HEK293 (cell line): ENCODE measurements at regions of chr5 and their contacts with region 1.

Region 1: DNA sequence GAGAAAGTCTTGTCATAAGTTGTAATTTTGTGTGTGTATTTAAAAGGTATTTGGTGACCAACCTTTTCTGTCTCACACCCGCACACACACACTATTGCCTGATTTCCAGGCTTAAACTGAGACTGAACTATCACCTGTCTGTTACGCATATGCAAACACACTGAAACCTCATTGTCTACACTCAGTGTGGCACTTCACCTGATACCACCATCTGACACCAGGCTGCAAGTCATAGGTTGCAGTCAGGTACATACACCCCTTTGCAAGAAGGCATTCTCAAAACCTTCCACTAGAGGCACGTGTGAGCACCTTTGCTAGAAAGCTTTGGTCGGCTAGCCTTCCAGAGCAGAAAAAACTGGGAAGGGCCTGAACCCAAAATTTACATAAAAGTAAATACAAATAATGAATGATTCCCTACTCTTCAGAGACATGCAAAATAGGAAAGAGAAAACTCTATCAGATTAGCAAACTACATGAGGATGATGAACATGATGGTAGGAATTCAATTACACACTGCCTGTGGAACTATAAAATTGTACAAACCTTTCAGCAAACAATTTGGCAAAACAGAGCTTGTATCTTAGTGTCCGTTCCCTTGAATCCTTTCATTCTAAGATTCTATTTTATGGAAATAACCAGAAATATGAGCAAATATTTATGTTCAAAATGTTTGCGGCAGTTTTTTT is 5.9 kb upstream of the FOXD1 start:
- H3K4me3 ChIP-seq: no peak overlapping the region
- H3K27ac ChIP-seq: no peak overlapping the region
- H3K4me1 ChIP-seq: no peaks in the 10 kb centered on the region
- CTCF ChIP-seq: peak; percentile 53

Region 2: DNA sequence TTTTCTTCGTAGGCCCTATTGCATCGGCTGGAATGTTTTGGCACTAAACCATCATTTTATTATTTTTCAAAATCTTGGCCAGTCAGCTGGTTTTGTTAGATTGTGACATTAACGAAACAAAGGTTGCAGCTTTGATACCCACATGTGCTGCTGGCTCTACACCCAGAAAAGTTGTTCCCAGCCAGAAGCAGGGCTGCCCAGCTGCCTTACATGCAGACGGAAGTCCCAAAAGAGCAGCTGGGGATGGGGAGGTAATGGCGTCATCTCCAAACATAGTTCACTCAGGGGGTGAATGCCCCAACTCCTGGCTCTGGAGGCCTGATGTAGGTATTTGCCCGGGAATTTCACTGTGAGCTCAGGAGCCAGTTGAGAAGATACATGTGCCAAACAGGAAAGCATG is 310.8 kb before region 1 on chr5:
- CTCF ChIA-PET with region 1: no interaction called
- POLR2A ChIA-PET with region 1: no interaction called
- H3K4me3 ChIP-seq: no peak overlapping the region
- H3K27ac ChIP-seq: no peak overlapping the region
- H3K4me1 ChIP-seq: no peaks in the 10 kb centered on the region
- CTCF ChIP-seq: no peak

Region 3: DNA sequence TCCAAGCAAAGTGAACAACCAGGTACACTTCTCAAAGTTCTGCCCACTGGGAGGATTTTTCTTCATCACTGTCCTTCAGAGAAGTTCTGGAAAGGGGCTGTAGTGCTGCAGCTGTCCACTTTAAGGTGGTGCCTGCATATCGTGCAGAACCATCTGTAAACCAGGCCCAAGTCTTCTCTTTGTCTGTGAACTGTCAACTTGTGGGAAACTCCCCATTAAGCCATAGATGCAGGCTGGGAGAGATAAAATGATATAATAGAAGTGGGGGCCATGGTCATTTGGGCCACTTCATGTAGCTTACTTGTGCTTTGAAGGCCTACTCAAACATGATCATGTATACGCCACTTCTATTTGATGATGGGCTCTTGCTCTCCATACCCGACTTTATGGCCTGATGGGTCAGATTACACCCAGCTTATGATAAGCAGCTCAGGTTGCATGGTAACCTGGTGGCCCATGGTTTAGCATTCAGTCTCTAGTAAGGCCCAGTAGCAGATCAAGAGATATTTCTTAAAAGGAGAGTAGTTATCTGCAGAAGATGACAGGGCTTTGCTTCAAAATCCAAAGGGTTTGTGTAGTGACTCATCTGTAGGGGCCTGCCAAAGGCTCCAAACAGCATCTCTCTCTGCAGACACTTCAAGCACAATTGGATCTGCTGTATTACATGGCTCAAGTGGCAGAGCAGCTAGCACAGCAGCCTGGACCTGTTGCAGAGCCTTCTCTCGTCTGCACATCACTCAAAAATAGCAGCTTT is 28.1 kb after region 1 on chr5:
- CTCF ChIA-PET with region 1: interaction called, 11 read pairs
- POLR2A ChIA-PET with region 1: no interaction called
- H3K4me3 ChIP-seq: no peak overlapping the region
- H3K27ac ChIP-seq: no peak overlapping the region
- H3K4me1 ChIP-seq: no peaks in the 10 kb centered on the region
- CTCF ChIP-seq: no peak

Region 4: DNA sequence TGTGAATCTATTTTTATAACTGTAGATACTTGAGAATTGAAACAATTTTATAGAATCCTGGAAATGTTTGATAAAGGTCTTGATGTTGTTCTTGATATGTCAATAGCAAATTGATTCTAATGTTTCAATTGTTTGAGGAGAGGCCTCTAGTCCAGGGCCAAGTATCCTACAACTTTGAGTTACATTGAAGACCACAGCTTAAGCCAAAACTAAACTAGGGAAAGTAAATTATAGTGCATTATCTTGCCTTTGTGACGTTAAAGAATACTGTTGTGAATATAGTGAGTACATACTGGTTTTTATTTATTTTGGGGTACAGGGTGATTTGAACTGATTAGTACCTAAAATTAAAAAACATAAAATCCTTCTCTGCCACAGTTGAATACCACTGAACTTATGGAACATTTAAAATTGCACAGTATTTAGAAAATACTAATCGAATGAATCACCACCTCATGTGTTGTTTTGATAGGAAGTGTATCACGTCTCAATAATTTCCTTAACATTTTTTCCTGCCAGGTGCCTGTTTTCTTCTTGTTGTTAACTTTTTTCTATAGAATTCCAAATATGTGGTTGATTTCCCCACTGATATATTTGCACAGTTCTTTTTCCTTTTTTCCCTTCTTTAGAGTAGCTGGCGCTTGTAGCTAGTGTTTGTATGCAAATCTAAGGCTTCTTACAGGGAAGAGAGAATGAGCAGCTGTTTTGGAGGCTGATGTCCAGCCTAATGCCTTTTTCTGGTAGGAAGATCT is 184.0 kb after region 1 on chr5:
- CTCF ChIA-PET with region 1: no interaction called
- POLR2A ChIA-PET with region 1: no interaction called
- H3K4me3 ChIP-seq: no peak overlapping the region; the same call in 1 of the 2 replicates
- H3K27ac ChIP-seq: no peak overlapping the region
- H3K4me1 ChIP-seq: peaks cover 43% of the 10 kb centered on the region
- CTCF ChIP-seq: no peak

Region 5: GRCh38 chr5:73722231-73722630 is 267.7 kb after region 1 on chr5:
- CTCF ChIA-PET with region 1: no interaction called
- POLR2A ChIA-PET with region 1: no interaction called
- H3K4me3 ChIP-seq: no peak overlapping the region
- H3K27ac ChIP-seq: no peak overlapping the region
- H3K4me1 ChIP-seq: no peaks in the 10 kb centered on the region
- CTCF ChIP-seq: no peak

Region 6: GRCh38 chr5:74055486-74056106 is 601.1 kb after region 1 on chr5:
- CTCF ChIA-PET with region 1: no interaction called
- POLR2A ChIA-PET with region 1: no interaction called
- H3K4me3 ChIP-seq: no peak overlapping the region
- H3K27ac ChIP-seq: no peak overlapping the region
- H3K4me1 ChIP-seq: no peaks in the 10 kb centered on the region; the same call in 1 of the 2 replicates
- CTCF ChIP-seq: no peak